Right ventricle myocardium superior (tissue), 1 donor: ENCODE measurements at regions of chr13 and their contacts with region 1.

Region 1: DNA sequence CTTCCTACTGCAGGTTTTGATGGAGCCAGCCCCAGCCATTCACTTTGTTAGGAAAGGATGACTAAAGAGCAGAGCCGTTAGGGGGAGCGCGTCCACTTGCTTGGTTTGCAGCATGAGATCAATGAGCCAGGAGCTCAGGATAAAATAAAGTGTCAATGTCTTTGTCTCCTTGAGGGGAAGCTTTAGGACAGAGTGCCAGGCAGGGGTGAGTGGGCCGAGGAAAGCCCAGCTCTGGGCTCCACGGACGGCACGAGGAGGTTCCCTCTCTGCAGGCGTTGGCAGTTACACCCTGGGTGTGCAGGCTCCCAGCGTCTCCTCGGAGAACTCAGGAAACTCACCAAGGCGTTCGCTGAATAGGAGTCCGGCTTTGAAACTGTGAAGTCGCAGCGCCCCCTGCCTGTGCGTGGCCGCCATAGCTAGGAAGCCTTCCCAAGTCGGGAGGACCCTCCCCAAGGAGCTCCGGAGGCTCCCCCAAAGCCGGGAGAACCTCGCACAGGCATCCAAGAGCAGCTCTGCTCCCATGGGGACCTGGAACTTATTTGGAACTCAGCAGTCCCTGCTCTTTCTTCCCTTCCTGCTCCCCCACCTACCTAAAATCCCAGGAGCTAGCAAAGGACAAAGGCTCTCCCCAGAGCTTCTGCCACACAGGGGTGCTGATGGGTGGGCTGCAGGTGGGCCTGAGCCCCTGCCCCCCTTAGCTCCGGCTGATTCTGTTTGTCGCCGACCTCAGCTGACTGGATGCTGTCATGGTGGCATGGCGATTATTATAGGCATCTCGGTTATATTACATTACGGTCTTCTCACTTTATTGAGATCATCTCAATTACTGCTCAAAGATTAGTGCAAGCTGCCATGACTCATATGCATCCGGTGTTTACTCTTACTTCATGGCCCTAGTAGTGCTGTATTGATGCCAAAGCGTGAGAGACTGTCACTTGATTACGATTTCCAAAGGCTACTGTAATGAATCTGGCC is 34.4 kb downstream of the GSX1 start:
- DNase-seq: peak; percentile 87
- ATAC-seq: peak; percentile 95

Region 2: DNA sequence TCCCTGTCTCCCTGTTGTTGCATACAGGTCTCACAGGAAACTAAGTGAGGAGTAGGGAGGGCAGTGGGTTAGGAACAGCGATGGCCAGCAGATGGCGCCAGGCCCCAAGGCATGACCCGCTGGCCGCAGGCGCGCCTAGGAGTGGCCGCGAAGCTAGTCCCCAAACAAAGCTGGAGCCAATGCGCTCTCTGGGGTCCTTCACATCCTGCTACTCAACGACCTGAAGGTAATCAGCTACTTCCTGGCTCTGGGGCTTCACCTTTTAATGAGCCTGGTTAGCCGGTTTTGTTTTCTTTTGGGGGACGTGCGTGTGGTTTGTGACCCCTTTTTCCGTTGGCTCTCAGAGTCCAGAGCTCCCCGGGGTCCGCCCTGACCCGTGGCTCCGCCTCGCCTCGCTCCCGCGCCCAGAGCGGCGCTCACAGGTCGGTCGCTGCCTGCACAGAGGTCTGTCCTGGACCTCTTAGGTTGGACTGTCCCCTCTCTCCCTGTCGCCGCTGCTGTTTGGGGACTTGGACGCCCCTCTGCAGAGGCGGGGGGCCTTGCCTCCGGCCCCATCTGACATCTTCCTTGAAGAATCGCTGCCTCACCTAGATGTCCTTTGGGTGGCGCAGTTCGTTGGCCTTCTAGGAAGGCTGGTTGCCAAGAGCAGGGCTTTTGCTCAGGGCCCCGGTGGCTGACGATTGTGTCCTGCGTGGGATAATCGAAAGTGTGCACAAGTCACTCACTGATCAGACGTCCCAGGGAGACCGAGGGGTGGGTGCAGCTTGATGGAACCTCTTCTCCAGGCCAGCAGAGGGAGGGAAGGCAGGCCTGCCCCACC is 464.4 kb before region 1 on chr13:
- intact Hi-C with region 1: loop called (anchors 2 kb)
- DNase-seq: peak; percentile 92
- ATAC-seq: peak; percentile 96

Region 3: DNA sequence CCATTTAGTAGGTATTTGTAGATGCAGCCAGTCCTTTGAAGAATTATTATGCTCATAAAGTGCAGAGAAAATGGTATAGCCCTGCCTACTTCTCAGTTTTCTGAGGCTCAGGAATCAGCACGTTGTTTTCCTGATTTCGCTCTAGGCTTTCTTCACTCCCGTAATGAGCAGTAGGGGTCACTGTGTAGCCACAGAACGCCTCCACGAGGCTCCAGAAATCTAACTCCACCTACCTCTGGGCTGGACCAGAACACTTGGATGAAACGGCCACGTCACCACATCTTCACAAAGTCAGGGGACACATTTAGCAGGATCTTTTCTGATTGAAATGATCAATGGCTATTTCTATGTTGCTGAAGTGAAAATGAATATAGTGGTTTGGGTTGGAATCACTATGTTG is 452.0 kb before region 1 on chr13:
- intact Hi-C with region 1: loop called (anchors 2 kb)
- DNase-seq: no peak
- ATAC-seq: peak; percentile 98

Region 4: DNA sequence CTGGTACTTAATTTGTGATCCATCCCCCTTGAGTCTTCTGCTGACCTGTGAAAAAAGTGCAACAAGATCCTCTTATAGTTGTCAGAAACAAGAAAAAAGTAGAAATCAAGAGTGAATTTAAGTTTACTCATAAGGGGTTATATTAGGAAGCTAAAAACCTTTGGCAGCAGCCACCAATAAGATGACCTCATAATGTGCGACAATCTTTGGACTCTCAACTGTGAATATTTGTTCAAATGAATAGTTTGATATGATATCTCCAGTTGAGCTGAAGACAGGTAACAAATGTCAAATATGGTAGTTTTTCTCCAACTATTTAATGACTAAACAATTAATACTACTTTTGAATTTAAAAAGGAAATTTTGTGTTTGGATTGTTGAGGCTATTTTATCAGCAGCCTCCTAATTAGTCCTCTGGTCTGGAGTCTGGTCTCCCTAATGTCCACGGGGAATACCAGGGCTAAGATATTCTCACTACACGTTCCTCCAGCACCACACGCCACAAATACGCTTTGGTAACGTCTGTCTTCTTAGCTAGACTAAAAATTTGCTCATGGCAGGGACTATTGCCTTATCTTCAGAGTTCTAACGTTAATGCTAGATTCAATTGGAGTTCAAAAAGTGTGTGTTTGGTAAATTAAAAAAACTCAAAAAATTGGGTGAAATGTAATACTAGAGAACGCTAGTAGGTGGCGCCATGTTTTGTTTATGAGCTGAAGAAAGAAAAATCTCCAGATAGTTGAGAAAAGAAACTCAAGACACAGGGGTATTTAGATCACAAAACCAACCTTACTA is 42.2 kb after region 1 on chr13:
- intact Hi-C with region 1: no loop called
- DNase-seq: no peak
- ATAC-seq: no peak

Region 5: GRCh38 chr13:27985600-27985999 is 158.9 kb after region 1 on chr13:
- intact Hi-C with region 1: loop called (anchors 2 kb)
- DNase-seq: no peak
- ATAC-seq: no peak